CD4-positive, alpha-beta memory T cell (primary cell): ENCODE measurements at regions of chr5 and their contacts with region 1.

Region 1: DNA sequence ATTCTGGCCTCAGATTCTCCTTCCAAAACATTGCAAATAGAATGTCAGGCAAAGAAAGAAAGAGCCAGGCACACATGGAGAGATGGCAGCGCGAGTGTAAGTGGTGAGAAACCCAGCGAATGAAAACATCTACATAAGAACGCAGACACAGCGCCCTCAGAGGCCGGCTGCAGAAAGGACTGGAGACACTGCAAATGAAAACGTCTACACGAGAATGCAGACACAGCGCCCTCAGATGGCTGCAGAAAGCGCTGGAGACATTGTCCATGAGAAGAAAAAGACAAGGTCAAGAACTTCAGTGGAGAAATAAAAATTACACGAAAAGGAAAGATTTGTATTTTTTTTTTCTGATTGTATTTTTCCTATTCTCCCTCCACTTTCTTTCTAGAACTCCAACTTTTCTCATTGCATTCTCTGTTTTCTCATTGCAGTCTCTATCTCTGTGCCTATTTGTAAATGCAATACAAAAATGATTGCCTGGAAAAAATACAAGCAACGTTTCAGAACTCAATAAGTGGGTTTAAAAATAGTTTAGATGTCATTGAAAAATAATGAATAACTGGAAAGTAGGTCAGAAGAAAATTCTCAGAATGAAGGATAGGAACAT is 117.9 kb upstream of the LPCAT1 start:
- DNase-seq: peak; percentile 43 to 76 (median 75)
- H3K4me3 ChIP-seq: no peak overlapping the region
- H3K4me3 Mint-ChIP-seq: peak overlapping the region in 2 of 8 donors; percentile 26 to 37
- H3K27ac ChIP-seq: no peak overlapping the region
- H3K27ac Mint-ChIP-seq: peak overlapping the region in 1 of 7 donors; percentile 47
- H3K4me1 ChIP-seq: peaks cover 6% of the 10 kb centered on the region
- H3K4me1 Mint-ChIP-seq: peaks cover 6 to 21% (median 12%) of the 10 kb centered on the region in 4 donors
- H3K27me3 ChIP-seq: peaks cover 24% of the 10 kb centered on the region
- H3K27me3 Mint-ChIP-seq: peaks cover 17 to 21% of the 10 kb centered on the region in 2 donors

Region 2: GRCh38 chr5:1167728-1168709 is 473.6 kb before region 1 on chr5:
- CTCF ChIA-PET with region 1: interaction called, 57 read pairs
- POLR2A ChIA-PET with region 1: no interaction called
- intact Hi-C with region 1: loop called (anchors 1 kb)
- DNase-seq: peak; percentile 65 to 73 (median 71)
- H3K4me3 ChIP-seq: no peak overlapping the region
- H3K4me3 Mint-ChIP-seq: peak overlapping the region; percentile 43 to 86 (median 79)
- H3K27ac ChIP-seq: no peak overlapping the region
- H3K27ac Mint-ChIP-seq: peak overlapping the region in 1 of 7 donors; percentile 8
- H3K4me1 ChIP-seq: peaks cover 10% of the 10 kb centered on the region
- H3K4me1 Mint-ChIP-seq: peaks cover 5 to 18% (median 9%) of the 10 kb centered on the region in 4 donors
- H3K27me3 ChIP-seq: no peaks in the 10 kb centered on the region
- H3K27me3 Mint-ChIP-seq: peaks cover 7 to 20% of the 10 kb centered on the region in 2 donors

Region 3: DNA sequence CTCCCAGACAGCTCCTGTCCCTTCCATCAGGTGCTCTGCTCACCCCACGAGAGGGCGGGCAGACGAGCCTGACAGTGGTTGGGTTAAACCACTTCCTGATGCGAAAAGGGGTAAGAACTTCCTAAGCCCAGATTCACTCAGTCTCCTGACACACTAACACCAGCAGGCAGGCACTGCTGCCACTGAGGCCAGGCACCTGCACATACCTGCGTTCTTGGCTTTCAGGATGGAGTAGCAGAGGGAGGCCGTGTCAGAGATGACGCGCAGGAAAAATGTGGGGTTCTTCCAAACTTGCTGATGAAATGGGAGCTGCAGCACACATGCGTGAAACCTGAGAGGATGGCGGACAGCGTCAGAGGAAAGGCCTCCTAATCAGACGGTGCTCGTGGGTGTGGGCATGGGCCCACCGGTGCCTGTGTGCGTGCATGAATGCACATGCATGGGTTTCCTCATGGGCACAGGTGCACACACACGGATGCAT is 386.5 kb before region 1 on chr5:
- CTCF ChIA-PET with region 1: no interaction called
- POLR2A ChIA-PET with region 1: no interaction called
- intact Hi-C with region 1: loop called (anchors 2 kb)
- DNase-seq: peak; percentile 59 to 66 (median 64)
- H3K4me3 ChIP-seq: peak overlapping the region; percentile 12 to 34
- H3K4me3 Mint-ChIP-seq: peak overlapping the region; percentile 69 to 84 (median 82)
- H3K27ac ChIP-seq: no peak overlapping the region
- H3K27ac Mint-ChIP-seq: peak overlapping the region; percentile 36 to 81 (median 58)
- H3K4me1 ChIP-seq: peaks cover 18% of the 10 kb centered on the region
- H3K4me1 Mint-ChIP-seq: peaks cover 15 to 22% (median 17%) of the 10 kb centered on the region in 4 donors
- H3K27me3 ChIP-seq: no peaks in the 10 kb centered on the region
- H3K27me3 Mint-ChIP-seq: no peaks in the 10 kb centered on the region

Region 4: DNA sequence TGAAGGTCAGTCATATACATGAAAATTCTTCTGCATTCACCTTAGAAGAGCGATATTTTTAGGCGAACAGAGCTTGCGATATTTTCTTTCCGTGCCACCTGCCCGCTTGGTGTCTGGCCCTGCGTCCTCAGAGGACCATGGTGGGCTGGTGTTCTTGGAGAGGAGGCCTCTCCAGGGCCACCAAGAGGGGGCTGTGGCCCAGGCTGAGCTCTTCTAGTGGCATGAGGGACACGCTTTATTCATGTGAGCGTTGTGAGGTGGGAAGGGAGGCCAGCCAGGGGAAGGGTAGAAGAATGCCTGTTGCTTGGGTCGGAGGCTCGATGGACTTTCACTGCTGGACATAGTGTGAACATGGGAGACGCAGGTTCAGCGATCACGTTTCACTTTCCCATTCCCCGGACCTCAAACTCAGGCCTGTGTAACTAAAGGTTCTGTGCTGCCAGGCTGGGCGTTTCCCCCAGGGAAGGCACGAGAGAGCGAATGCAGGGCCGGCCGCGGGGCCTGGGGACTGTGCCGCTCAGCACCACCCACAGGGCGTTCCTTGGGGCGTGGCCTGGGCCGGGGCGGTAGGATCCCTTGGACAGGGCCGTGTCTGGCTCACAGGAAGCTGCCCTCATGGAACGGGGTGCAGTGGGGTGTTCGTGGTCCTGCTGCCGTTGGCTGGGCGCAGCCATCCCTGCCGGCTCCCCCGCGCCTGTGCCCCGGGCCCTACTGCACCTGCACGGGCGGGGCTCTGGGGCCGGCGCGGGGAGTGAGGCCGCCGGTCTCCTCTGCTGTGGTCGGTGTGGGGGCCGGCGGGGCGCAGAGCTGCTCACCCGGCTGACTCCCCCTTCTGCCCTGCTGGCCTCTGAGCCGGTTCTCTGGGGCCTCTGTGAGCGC is 256.0 kb before region 1 on chr5:
- CTCF ChIA-PET with region 1: interaction called, 38 read pairs
- POLR2A ChIA-PET with region 1: interaction called, 13 read pairs
- intact Hi-C with region 1: loop called (anchors 1 kb)
- DNase-seq: peak; percentile 75 to 82 (median 76)
- H3K4me3 ChIP-seq: peak overlapping the region; percentile 69 to 70
- H3K4me3 Mint-ChIP-seq: peak overlapping the region; percentile 98 to 100 (median 99)
- H3K27ac ChIP-seq: peak overlapping the region; percentile 83
- H3K27ac Mint-ChIP-seq: peak overlapping the region; percentile 94 to 100 (median 100)
- H3K4me1 ChIP-seq: peaks cover 25% of the 10 kb centered on the region
- H3K4me1 Mint-ChIP-seq: peaks cover 20 to 39% (median 27%) of the 10 kb centered on the region in 4 donors
- H3K27me3 ChIP-seq: no peaks in the 10 kb centered on the region
- H3K27me3 Mint-ChIP-seq: no peaks in the 10 kb centered on the region

Region 5: DNA sequence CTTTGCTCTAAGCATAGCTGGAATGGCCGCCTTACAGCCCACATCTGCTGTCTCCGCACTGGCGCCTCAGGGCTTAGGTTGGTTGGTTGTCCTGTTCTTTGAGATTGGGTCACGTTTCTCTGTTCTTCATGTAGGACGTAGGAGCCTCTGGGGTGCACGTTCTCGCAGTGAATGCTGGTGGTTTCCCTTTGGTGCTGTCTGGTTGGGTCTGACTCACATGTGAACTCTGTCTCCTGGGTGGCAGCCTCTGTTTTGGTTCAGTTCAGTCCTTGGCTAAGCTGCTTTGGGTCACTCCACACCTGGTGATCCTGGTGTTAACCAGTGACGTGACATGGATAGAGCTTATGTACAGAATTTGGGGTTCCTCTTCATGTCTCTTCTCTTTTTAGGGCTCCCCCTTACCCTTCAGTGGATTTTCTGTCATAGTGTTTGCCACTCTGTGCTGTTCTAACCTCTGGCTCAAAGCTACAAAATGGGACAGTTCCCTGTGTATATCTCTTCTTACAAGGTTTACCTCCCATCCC is 105.3 kb before region 1 on chr5:
- CTCF ChIA-PET with region 1: interaction called, 3 read pairs
- POLR2A ChIA-PET with region 1: no interaction called
- intact Hi-C with region 1: loop called (anchors 2 kb)
- DNase-seq: peak; percentile 67 to 89 (median 71)
- H3K4me3 ChIP-seq: peak overlapping the region; percentile 26 to 30
- H3K4me3 Mint-ChIP-seq: peak overlapping the region; percentile 77 to 90 (median 84)
- H3K27ac ChIP-seq: peak overlapping the region; percentile 72
- H3K27ac Mint-ChIP-seq: peak overlapping the region; percentile 88 to 98 (median 92)
- H3K4me1 ChIP-seq: peaks cover 26% of the 10 kb centered on the region
- H3K4me1 Mint-ChIP-seq: peaks cover 20 to 35% (median 28%) of the 10 kb centered on the region in 4 donors
- H3K27me3 ChIP-seq: no peaks in the 10 kb centered on the region
- H3K27me3 Mint-ChIP-seq: no peaks in the 10 kb centered on the region

Region 6: GRCh38 chr5:1652596-1653345 is 11.1 kb after region 1 on chr5:
- CTCF ChIA-PET with region 1: interaction called, 12 read pairs
- POLR2A ChIA-PET with region 1: no interaction called
- intact Hi-C with region 1: no loop called
- DNase-seq: no peak
- H3K4me3 ChIP-seq: no peak overlapping the region
- H3K4me3 Mint-ChIP-seq: peak overlapping the region in 4 of 8 donors; percentile 26 to 73 (median 46)
- H3K27ac ChIP-seq: no peak overlapping the region
- H3K27ac Mint-ChIP-seq: no peak overlapping the region
- H3K4me1 ChIP-seq: peaks cover 6% of the 10 kb centered on the region
- H3K4me1 Mint-ChIP-seq: peaks cover 0 to 5% (median 2%) of the 10 kb centered on the region in 4 donors
- H3K27me3 ChIP-seq: peaks cover 10% of the 10 kb centered on the region
- H3K27me3 Mint-ChIP-seq: peaks cover 22 to 38% of the 10 kb centered on the region in 2 donors